Activated B cell treated with CpG ODN at 0.5 μM for 24 hours (primary cell): ENCODE measurements at regions of chr22 and their contacts with region 1.

Region 1: GRCh38 chr22:41919357-41920224 is 4.7 kb upstream of the SHISA8 start:
- DNase-seq: peak; percentile 82
- ATAC-seq: peak; percentile 53
- H3K4me3 Mint-ChIP-seq: peak overlapping the region; percentile 82
- H3K27ac Mint-ChIP-seq: peak overlapping the region; percentile 94
- H3K4me1 Mint-ChIP-seq: peaks cover 88% of the 10 kb centered on the region
- H3K27me3 Mint-ChIP-seq: no peaks in the 10 kb centered on the region
- CTCF ChIP-seq: no peak

Region 2: DNA sequence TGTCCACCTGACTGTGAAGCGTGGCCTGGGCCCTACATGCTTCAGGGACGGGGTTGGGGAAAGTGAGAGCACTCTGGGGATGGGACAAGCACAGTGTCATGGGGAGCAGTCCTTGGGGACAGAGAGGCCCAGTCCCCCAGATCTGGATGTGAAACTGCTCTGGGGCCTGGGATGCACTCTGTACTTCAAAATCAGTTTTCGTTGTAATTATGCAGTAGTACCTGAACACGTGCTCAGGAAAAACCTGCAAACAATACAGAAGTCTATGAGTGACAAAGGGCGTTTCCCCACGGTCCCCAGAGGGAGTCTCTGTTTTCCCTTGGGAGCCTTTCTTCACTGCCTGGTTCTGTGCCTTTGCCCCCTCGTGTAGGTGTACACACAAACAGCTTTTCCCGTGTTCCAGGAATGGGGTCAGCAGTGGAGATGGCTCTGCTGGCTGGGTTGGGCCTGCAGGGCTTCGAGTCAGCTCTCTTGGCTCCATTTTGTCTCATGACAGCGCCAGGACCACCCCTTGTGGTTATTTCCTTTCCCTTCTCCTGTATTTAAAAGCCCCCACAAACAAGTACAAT is 12.2 kb after region 1 on chr22:
- CTCF ChIA-PET with region 1: interaction called, 258 read pairs
- POLR2A ChIA-PET with region 1: interaction called, 1,414 read pairs
- intact Hi-C with region 1: loop called (anchors 1 kb)
- DNase-seq: peak; percentile 72
- ATAC-seq: peak; percentile 35
- H3K4me3 Mint-ChIP-seq: peak overlapping the region; percentile 52
- H3K27ac Mint-ChIP-seq: peak overlapping the region; percentile 100
- H3K4me1 Mint-ChIP-seq: peaks cover 97% of the 10 kb centered on the region
- H3K27me3 Mint-ChIP-seq: no peaks in the 10 kb centered on the region
- CTCF ChIP-seq: no peak

Region 3: DNA sequence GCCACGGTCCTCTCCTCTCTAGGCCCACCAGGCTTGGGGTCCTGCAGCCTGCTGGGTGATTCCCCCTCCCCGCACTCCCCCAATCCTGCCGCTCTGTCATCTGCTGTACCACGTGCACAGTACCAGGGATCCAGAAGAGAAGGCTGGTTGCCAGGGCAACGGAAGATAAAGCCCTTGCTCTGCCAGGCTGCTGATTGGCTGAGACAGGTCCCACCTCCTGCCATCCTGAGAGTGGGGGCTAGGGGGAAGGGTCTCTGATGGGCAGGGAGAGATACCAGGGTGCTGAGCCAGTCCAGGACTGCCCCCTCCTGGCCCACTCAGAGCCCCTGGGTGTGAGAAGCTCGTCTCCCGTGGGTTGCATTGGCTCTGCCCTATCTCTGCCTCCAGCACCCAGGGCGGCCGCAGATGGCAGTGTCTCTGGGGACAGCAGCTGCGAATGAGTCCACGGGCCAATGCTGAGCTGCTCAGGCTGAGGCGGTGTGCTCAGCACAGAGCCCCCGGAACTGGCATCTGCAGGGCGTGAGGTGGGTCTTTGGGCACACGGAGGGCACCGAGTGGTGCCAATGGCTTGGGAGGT is 32.4 kb after region 1 on chr22 and contains the start of gene SMIM45:
- CTCF ChIA-PET with region 1: interaction called, 12 read pairs
- POLR2A ChIA-PET with region 1: interaction called, 68 read pairs
- intact Hi-C with region 1: no loop called
- DNase-seq: peak; percentile 57
- ATAC-seq: peak; percentile 87
- H3K4me3 Mint-ChIP-seq: peak within 1 kb of the TSS; percentile 35
- H3K27ac Mint-ChIP-seq: no peak within 1 kb of the TSS
- H3K4me1 Mint-ChIP-seq: peaks cover 60% of the 10 kb centered on the region
- H3K27me3 Mint-ChIP-seq: no peaks in the 10 kb centered on the region
- CTCF ChIP-seq: no peak